Sigmoid colon (tissue), 7 donors: ENCODE measurements at regions of chr16 and their contacts with region 1.

Region 1: GRCh38 chr16:17744903-17745575 is 274.3 kb upstream of the XYLT1 start:
- DNase-seq: no peak
- H3K4me3 ChIP-seq: peak overlapping the region; percentile 34 to 49 (median 46)
- H3K27ac ChIP-seq: peak overlapping the region; percentile 81 to 90 (median 89)
- H3K4me1 ChIP-seq: peaks cover 0 to 15% (median 14%) of the 10 kb centered on the region in 4 donors
- H3K27me3 ChIP-seq: no peaks in the 10 kb centered on the region
- CTCF ChIP-seq: no peak
- EP300 ChIP-seq: no peak
- POLR2A ChIP-seq: no peak

Region 2: DNA sequence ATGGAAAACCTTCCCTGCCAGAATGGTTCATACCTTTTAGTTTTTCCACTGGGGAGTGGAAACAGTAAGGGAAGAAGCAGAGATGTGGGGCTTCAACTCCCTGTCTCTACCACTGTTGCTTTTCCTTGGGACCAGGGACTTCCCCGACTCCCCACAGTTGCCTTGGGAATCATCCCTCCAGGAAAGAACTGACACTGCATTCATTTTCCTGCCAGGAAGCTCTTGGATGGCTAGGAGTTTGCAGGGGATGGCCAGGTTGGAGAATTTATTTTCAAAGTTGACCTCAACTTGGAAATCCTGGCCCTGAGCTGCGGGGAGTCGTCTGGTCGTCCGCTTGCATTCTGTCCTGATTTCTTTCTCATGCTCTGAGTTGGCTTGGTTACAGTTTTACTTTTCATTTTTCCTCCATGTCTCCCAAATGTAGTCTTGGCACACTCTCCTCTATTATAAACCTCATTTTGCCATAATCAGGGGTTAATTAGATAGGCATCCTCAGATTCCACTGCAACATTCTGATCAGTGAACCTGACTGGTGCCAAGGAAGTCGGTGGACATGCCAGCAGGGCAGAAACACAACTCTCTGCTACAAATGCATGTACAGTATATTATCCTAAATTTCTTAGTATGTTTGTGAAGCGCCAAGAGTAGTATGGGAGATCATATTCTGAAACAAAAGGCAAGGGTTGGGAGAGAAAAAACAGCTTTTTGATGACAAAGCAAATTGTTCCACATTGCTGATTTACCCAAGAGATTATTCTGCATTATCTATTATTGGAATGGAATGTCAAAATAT is 53.7 kb before region 1 on chr16:
- intact Hi-C with region 1: no loop called
- DNase-seq: no peak
- H3K4me3 ChIP-seq: no peak overlapping the region
- H3K27ac ChIP-seq: no peak overlapping the region
- H3K4me1 ChIP-seq: no peaks in the 10 kb centered on the region
- H3K27me3 ChIP-seq: no peaks in the 10 kb centered on the region
- CTCF ChIP-seq: no peak
- EP300 ChIP-seq: no peak
- POLR2A ChIP-seq: no peak

Region 3: GRCh38 chr16:17828012-17828411 is 83.0 kb after region 1 on chr16:
- intact Hi-C with region 1: loop called (anchors 5 kb)
- DNase-seq: no peak
- H3K4me3 ChIP-seq: no peak overlapping the region
- H3K27ac ChIP-seq: peak overlapping the region in 1 of 4 donors; percentile 12
- H3K4me1 ChIP-seq: peaks cover 0 to 26% (median 14%) of the 10 kb centered on the region in 4 donors
- H3K27me3 ChIP-seq: no peaks in the 10 kb centered on the region
- CTCF ChIP-seq: no peak
- EP300 ChIP-seq: peak in 1 of 4 donors; percentile 3
- POLR2A ChIP-seq: no peak